HEK293T (cell line): ENCODE measurements at regions of chr5 and their contacts with region 1.

Region 1: GRCh38 chr5:140647042-140647341 is 438 bp downstream of the NDUFA2 start:
- DNase-seq: peak; percentile 22

Region 2: DNA sequence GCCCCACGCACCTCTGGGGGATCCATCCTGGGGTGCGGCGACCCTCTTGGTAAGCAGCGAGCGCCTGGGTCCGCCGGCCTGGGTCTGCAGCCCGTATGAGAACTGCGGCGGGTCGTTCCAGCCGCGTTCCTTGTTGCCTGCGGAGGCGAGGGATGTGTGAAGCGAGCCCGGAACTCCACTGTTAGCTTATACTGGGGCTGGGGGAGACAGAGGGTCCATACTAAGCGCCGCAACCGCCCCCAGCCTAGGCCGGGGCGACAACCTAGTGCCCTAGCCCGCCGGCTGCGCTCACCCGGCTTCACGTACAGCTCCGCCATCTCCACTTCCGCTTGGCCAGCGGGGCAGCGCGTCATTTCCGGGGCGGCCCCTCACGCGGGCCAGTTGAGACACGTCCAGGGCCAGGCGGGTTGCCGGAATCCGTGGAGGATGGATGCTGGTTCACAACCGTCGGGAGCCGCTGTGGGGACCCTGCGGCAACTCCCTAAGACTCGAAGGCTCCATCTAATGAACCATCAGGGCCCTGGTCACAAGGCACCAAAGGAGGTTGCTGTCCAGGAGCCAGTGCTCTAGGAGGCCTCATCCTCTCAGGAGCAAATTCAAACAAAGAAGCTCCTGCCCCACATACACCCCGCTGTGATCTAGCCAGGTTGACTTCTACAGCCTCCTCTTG is 89.7 kb before region 1 on chr5 and contains the start of gene SRA1:
- CTCF ChIA-PET with region 1: no interaction called
- POLR2A ChIA-PET with region 1: interaction called, 16 read pairs
- DNase-seq: peak; percentile 92

Region 3: DNA sequence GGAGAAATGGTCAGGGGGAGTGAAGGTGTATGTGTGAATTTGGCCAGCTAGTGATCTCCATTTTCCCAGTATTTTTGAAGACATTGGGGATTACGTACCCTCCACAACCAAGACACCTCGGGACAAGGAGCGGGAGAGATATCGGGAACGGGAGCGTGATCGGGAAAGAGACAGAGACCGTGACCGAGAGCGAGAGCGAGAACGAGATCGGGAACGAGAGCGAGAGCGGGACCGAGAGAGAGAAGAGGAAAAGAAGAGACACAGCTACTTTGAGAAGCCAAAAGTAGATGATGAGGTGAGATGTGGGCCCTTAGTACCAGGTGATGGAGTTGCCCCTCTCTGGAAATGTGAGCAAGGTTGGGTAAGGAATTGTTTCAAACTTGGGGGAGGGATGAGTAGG is 11.9 kb after region 1 on chr5:
- CTCF ChIA-PET with region 1: no interaction called
- POLR2A ChIA-PET with region 1: interaction called, 46 read pairs
- DNase-seq: no peak

Region 4: GRCh38 chr5:140700177-140701144 is 53.5 kb after region 1 on chr5 and contains the start of gene ZMAT2:
- CTCF ChIA-PET with region 1: no interaction called
- POLR2A ChIA-PET with region 1: interaction called, 12 read pairs
- DNase-seq: peak; percentile 95

Region 5: GRCh38 chr5:140753561-140753960 is 106.6 kb after region 1 on chr5:
- CTCF ChIA-PET with region 1: no interaction called
- POLR2A ChIA-PET with region 1: no interaction called
- DNase-seq: no peak

Region 6: DNA sequence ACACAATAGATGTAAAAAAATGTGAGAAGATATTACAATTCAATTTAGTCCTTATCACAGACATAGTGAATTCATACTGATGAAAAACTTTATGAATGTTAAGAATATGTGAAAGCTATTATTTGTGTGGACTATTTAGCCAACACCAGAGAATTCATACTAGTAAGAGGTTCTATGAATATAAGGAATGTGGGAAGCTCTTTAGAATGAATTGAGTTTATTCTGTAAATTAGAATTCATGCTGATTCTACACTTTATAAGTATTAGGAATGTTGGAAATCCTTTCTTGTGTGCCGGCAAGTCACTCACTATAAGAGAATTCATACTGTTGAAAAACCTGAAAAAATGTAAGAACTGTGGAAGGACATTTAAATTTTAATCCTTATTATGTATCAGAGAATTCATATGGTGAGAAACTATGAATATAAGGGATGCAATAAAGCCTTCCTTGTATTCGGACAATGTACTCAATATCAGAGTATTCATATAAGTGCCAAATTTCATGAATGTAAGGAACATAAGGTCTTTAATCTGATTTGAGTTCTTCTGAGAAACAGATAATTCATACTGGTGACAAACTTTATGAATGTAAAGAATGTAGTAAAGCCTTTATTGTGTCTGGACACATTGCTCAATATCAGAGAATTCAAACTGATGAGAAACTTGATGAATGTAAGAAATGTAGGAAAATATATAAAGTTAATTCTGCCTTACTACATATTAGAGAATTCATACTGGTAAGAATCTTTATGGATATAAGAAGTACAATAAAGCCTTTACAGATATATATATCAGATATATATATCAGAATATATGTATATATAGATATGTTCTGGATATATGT is 117.4 kb after region 1 on chr5:
- CTCF ChIA-PET with region 1: no interaction called
- POLR2A ChIA-PET with region 1: no interaction called
- DNase-seq: no peak

Region 7: DNA sequence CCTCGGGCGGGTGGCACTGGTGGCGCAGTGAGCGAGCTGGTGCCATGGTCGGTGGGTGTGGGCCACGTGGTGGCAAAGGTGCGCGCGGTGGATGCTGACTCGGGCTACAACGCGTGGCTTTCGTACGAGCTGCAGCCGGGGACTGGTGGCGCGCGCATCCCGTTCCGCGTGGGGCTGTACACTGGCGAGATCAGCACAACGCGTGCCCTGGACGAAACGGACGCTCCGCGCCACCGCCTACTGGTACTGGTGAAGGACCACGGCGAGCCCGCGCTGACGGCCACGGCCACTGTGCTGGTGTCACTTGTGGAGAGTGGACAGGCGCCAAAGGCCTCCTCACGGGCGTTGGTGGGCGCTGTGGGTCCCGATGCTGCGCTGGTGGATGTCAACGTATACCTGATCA is 161.9 kb after region 1 on chr5:
- CTCF ChIA-PET with region 1: no interaction called
- POLR2A ChIA-PET with region 1: no interaction called
- DNase-seq: no peak